ENCODE measurements at regions of chr21 and their contacts with region 1.

Region 1: GRCh38 chr21:36113647-36114428 is 21.0 kb upstream of the CBR3 start:
- DNase-seq: peak; percentile 67
- H3K4me3 ChIP-seq: peak overlapping the region; percentile 63; the same call in 1 of the 2 replicates
- H3K27ac ChIP-seq: peak overlapping the region; percentile 63
- H3K4me1 ChIP-seq: peaks cover 6% of the 10 kb centered on the region; the same call in 1 of the 2 replicates
- H3K27me3 ChIP-seq: no peaks in the 10 kb centered on the region
- CTCF ChIP-seq: no peak

Region 2: DNA sequence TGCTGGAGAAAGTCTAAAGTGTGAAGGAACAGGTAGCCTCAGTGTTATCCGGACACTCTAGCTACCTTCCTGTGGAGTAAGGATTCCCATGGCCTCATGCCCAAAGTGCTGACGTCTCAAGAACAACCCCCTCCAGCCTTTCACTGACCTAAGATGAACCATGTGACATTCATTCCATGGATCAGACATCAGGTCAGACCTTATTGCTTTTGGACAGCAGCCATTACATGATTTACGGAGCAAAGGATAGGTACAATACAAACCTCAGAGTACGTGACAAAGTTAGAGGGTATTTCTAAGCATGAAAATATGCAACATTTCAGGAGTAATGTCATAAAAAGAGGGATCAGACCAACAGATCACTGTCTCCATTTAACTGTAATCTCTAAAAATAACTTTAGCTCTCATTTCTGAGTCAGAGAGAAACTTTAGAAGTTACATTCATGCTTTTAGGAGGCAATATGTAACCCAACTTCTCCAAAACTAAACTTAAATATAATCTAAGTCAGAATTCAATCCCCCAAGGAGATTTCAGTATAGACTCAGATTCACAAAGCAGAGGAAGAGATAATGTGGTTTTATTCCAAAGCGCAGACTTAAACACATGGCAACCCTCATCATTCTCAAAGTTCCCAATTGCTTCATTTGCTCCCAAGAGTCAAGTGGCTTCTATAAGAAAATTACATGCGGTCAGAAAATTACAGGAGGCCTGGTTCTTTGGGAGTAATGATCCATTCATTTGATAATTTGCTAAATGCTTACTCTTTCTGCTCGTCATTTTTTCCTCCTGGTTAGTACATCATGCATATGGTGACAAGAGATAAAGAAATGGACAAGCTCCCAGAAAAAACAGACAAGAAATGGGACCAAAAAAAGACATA is 333.9 kb before region 1 on chr21:
- CTCF ChIA-PET with region 1: interaction called, 10 read pairs
- POLR2A ChIA-PET with region 1: no interaction called
- intact Hi-C with region 1: no loop called
- DNase-seq: no peak
- H3K4me3 ChIP-seq: no peak overlapping the region
- H3K27ac ChIP-seq: no peak overlapping the region
- H3K4me1 ChIP-seq: peaks cover 12% of the 10 kb centered on the region
- H3K27me3 ChIP-seq: no peaks in the 10 kb centered on the region
- CTCF ChIP-seq: no peak

Region 3: GRCh38 chr21:35940074-35940927 is 173.5 kb before region 1 on chr21:
- CTCF ChIA-PET with region 1: no interaction called
- POLR2A ChIA-PET with region 1: no interaction called
- intact Hi-C with region 1: loop called (anchors 5 kb)
- DNase-seq: peak in 1 of 2 experiments; percentile 25
- H3K4me3 ChIP-seq: no peak overlapping the region
- H3K27ac ChIP-seq: no peak overlapping the region
- H3K4me1 ChIP-seq: no peaks in the 10 kb centered on the region
- H3K27me3 ChIP-seq: no peaks in the 10 kb centered on the region
- CTCF ChIP-seq: peak; percentile 63

Region 4: GRCh38 chr21:36028127-36029069 is 85.4 kb before region 1 on chr21:
- CTCF ChIA-PET with region 1: no interaction called
- POLR2A ChIA-PET with region 1: no interaction called
- intact Hi-C with region 1: loop called (anchors 2 kb)
- DNase-seq: peak; percentile 44 to 67
- H3K4me3 ChIP-seq: no peak overlapping the region
- H3K27ac ChIP-seq: no peak overlapping the region
- H3K4me1 ChIP-seq: no peaks in the 10 kb centered on the region
- H3K27me3 ChIP-seq: no peaks in the 10 kb centered on the region
- CTCF ChIP-seq: peak; percentile 83

Region 5: DNA sequence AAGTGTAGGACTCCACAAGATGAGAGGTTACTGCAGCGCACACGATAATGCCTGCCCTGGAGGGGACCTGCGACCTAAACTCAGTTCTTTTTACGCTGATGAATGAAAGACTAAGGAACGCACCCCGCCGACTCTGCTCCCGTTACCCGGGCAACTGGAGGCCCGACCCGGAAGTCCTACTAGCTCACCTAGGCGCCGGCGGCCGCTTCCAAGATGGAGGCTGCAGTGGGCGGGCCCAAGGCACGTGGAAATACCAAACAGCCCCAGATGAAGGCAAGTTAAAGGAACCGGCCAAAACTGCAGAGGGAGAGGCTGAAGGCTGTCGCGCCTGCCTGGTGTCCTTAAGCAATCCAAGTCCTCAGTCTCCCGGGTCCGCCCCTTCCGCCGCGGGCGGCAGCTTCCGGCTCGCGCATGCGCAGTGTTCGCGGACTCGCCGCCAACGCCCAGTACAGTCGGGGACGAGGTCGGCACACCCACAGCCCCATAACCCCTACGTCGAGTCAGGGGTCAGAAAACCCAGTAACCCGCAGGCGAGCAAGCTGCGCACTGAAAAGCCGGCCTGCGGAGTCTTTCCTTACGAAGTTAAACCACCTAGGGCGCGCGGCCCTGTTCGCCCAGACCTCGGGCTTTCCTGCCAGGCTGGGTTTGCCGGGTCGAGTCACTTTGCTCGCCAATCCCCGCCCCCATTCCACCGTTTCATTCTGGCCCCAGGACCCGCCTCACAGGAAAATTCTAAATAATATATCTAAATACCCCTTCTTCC is 53.5 kb before region 1 on chr21 and contains the start of gene SETD4:
- CTCF ChIA-PET with region 1: interaction called, 6 read pairs
- POLR2A ChIA-PET with region 1: no interaction called
- intact Hi-C with region 1: loop called (anchors 1 kb)
- DNase-seq: peak; percentile 86 to 91
- H3K4me3 ChIP-seq: peak within 1 kb of the TSS; percentile 96
- H3K27ac ChIP-seq: peak within 1 kb of the TSS; percentile 81
- H3K4me1 ChIP-seq: peaks cover 16% of the 10 kb centered on the region
- H3K27me3 ChIP-seq: no peaks in the 10 kb centered on the region
- CTCF ChIP-seq: no peak
- total RNA-seq, gene SETD4: 24.2 and 27.3 TPM in 2 replicates

Region 6: DNA sequence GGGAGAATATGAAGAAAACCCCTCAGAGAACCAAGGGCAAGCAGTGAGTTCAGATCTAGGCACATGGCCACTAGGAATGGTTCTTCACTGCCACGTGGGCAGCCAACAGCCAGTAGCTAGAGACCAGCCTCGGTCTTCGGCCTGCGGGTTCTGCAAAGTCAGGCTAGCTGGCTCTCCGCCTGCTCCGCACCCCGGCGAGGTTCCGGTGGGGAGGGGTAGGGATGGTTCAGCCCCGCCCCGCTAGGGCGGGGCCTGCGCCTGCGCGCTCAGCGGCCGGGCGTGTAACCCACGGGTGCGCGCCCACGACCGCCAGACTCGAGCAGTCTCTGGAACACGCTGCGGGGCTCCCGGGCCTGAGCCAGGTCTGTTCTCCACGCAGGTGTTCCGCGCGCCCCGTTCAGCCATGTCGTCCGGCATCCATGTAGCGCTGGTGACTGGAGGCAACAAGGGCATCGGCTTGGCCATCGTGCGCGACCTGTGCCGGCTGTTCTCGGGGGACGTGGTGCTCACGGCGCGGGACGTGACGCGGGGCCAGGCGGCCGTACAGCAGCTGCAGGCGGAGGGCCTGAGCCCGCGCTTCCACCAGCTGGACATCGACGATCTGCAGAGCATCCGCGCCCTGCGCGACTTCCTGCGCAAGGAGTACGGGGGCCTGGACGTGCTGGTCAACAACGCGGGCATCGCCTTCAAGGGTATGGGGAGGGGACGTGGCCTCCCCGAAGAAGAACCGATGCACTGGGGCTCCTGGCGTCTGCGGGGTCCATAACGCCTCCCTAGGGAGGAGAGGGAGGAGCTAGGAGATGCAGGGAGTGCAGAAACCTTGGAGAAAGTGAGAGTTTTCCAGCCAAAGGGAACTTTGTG is 43.9 kb before region 1 on chr21 and contains the start of gene CBR1:
- CTCF ChIA-PET with region 1: interaction called, 11 read pairs
- POLR2A ChIA-PET with region 1: interaction called, 3 read pairs
- intact Hi-C with region 1: no loop called
- DNase-seq: peak; percentile 76 to 86
- H3K4me3 ChIP-seq: peak within 1 kb of the TSS; percentile 78
- H3K27ac ChIP-seq: peak within 1 kb of the TSS; percentile 79
- H3K4me1 ChIP-seq: peaks cover 21% of the 10 kb centered on the region
- H3K27me3 ChIP-seq: no peaks in the 10 kb centered on the region
- CTCF ChIP-seq: no peak
- total RNA-seq, gene CBR1: 80.2 and 89.7 TPM in 2 replicates

Region 7: GRCh38 chr21:36589355-36589971 is 475.6 kb after region 1 on chr21:
- CTCF ChIA-PET with region 1: no interaction called
- POLR2A ChIA-PET with region 1: no interaction called
- intact Hi-C with region 1: no loop called
- DNase-seq: no peak
- H3K4me3 ChIP-seq: no peak overlapping the region
- H3K27ac ChIP-seq: no peak overlapping the region
- H3K4me1 ChIP-seq: no peaks in the 10 kb centered on the region
- H3K27me3 ChIP-seq: no peaks in the 10 kb centered on the region
- CTCF ChIP-seq: peak; percentile 56